CD8-positive, alpha-beta T cell (primary cell): ENCODE measurements at regions of chr19 and their contacts with region 1.

Region 1: DNA sequence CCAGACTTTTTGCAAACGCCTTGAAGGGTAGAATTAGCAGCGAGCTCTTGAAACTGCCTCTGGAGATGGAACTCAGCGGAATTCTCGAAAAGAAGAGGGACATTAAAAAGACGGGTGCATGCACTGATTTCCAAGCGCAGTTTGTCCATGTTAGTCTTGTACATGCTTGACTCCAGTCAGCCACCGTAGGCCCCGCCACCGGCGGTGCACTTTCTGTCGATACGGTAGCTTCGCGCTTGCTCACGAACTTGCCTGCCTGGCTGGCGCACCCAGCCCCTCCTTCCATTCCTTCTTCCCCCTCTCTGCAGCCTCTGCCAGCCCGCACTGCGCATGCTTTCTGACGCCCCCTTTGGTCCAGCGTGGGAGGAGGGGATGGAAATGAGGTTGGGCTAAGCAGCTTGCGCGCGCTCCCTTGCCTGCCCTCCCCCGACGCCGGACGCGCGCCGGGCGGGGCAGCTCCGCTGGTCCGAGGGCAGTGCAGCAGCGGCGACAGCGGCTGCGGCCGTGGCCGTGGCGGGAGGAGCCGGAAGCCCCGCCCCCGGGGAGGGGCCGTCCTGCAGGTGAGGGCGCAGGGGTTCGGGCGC is at the start of gene ZNF575:
- DNase-seq: peak; percentile 63 to 94 (median 87)
- ATAC-seq: peak; percentile 43
- H3K4me3 ChIP-seq: peak within 1 kb of the TSS; percentile 65 to 79
- H3K4me3 Mint-ChIP-seq: peak within 1 kb of the TSS; percentile 98
- H3K27ac ChIP-seq: peak within 1 kb of the TSS; percentile 55 to 76
- H3K27ac Mint-ChIP-seq: peak within 1 kb of the TSS; percentile 97
- H3K4me1 ChIP-seq: peaks cover 7% of the 10 kb centered on the region
- H3K4me1 Mint-ChIP-seq: peaks cover 19% of the 10 kb centered on the region
- H3K27me3 ChIP-seq: no peaks in the 10 kb centered on the region
- H3K27me3 Mint-ChIP-seq: no peaks in the 10 kb centered on the region
- CTCF ChIP-seq: no peak
- total RNA-seq, gene ZNF575: 2.4 to 3.4 TPM

Region 2: DNA sequence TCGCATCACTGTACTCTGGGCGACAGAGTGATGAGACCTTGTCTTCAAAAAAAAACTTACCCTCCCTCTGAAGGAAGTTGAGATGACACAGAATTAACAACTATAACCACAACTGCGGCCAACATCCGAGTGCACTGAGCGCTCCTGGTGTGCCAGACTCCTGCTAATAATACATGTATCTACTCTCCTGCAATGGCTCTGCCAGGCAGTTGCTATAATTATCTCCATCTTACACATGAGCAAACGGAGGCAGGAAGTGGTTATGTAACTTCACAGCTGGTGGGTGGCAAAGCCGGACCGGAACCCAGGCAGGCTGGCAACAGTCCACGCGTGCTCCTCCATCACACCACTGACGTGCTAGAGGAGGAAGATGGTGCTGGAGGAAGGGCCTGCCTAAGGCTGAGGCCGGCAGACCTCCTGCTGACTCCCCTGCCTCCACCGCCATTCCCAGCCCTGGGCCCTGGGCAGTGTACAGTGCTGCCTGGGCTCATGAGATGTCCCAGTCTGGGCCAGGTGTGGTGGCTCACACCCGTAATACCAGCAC is 29.7 kb after region 1 on chr19:
- CTCF ChIA-PET with region 1: interaction called, 4 read pairs
- POLR2A ChIA-PET with region 1: interaction called, 4 read pairs
- intact Hi-C with region 1: loop called in 1 of 2 experiments (anchors 2 kb)
- DNase-seq: peak; percentile 67 to 96 (median 82)
- ATAC-seq: peak; percentile 87
- H3K4me3 ChIP-seq: peak overlapping the region; percentile 10 to 30
- H3K4me3 Mint-ChIP-seq: peak overlapping the region; percentile 66
- H3K27ac ChIP-seq: peak overlapping the region; percentile 78 to 97
- H3K27ac Mint-ChIP-seq: peak overlapping the region; percentile 90
- H3K4me1 ChIP-seq: peaks cover 49% of the 10 kb centered on the region
- H3K4me1 Mint-ChIP-seq: peaks cover 54% of the 10 kb centered on the region
- H3K27me3 ChIP-seq: no peaks in the 10 kb centered on the region
- H3K27me3 Mint-ChIP-seq: no peaks in the 10 kb centered on the region
- CTCF ChIP-seq: no peak